ENCODE measurements at regions of chr1 and their contacts with region 1.

Region 1: GRCh38 chr1:115717541-115717940 is 51.0 kb downstream of the CASQ2 start:
- DNase-seq: peak; percentile 65
- ATAC-seq: no peak
- H3K4me3 Mint-ChIP-seq: no peak overlapping the region
- H3K27ac Mint-ChIP-seq: no peak overlapping the region
- H3K4me1 Mint-ChIP-seq: no peaks in the 10 kb centered on the region
- H3K27me3 Mint-ChIP-seq: peaks cover 2% of the 10 kb centered on the region
- CTCF ChIP-seq: peak; percentile 22

Region 2: GRCh38 chr1:115771847-115772457 is 54.4 kb after region 1 on chr1:
- CTCF ChIA-PET with region 1: interaction called, 12 read pairs
- POLR2A ChIA-PET with region 1: no interaction called
- intact Hi-C with region 1: loop called (anchors 5 kb)
- DNase-seq: peak; percentile 6
- ATAC-seq: peak; percentile 27
- H3K4me3 Mint-ChIP-seq: no peak overlapping the region
- H3K27ac Mint-ChIP-seq: no peak overlapping the region
- H3K4me1 Mint-ChIP-seq: no peaks in the 10 kb centered on the region
- H3K27me3 Mint-ChIP-seq: peaks cover 9% of the 10 kb centered on the region
- CTCF ChIP-seq: peak; percentile 50